ENCODE measurements at regions of chr15 and their contacts with region 1.

Region 1: DNA sequence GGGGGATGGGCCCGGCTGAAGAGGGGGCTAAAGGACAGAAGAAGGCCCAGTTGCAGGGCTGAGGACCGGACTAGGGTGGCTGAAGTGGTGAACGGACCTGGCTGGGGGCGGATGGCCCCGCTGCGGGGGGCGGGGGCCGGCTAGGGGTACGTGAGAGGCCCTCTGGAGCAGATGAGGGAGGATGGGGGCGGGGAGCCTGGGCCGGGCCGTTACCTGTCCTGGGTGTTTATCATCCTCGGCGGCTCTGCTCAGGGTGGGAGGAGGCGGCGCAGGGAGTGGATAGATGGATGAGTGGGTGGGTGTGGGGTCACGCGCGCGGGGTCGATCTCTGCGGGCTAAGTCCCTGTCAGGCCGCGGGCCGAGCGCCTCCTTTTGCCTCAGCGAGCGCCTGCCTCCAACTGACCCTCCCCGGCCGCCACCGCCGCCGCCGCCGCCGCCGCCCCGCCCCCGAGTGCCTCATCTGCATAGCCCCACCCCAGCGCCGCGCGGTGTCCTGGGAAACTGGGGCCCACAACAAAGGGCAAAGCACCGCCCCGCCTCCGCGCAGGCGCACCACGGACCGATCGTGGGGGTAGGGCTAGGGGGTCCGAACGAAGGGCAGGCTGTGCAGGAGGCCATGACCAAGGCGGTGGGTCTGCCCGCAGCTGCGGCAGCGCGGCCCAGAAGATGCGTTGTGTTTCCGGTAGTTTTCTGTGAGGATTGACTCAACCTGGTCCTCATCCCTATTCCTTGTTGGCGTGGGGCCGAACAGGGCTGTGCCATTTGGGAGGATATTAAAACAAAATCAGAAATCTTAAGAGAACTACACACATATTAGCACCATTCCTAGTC is 72.4 kb downstream of the RBPMS2 start:
- DNase-seq: peak; percentile 97
- H3K4me3 Mint-ChIP-seq: peak overlapping the region; percentile 83
- H3K27ac Mint-ChIP-seq: peak overlapping the region; percentile 41
- H3K4me1 Mint-ChIP-seq: peaks cover 51% of the 10 kb centered on the region
- H3K27me3 Mint-ChIP-seq: no peaks in the 10 kb centered on the region

Region 2: GRCh38 chr15:64162870-64163658 is 540.0 kb before region 1 on chr15 and contains the start of gene PPIB:
- CTCF ChIA-PET with region 1: no interaction called
- POLR2A ChIA-PET with region 1: no interaction called
- intact Hi-C with region 1: loop called (anchors 10 kb)
- DNase-seq: peak; percentile 98
- H3K4me3 Mint-ChIP-seq: peak within 1 kb of the TSS; percentile 88
- H3K27ac Mint-ChIP-seq: peak within 1 kb of the TSS; percentile 94
- H3K4me1 Mint-ChIP-seq: peaks cover 43% of the 10 kb centered on the region
- H3K27me3 Mint-ChIP-seq: no peaks in the 10 kb centered on the region
- total RNA-seq, gene PPIB: 277 to 283 TPM

Region 3: DNA sequence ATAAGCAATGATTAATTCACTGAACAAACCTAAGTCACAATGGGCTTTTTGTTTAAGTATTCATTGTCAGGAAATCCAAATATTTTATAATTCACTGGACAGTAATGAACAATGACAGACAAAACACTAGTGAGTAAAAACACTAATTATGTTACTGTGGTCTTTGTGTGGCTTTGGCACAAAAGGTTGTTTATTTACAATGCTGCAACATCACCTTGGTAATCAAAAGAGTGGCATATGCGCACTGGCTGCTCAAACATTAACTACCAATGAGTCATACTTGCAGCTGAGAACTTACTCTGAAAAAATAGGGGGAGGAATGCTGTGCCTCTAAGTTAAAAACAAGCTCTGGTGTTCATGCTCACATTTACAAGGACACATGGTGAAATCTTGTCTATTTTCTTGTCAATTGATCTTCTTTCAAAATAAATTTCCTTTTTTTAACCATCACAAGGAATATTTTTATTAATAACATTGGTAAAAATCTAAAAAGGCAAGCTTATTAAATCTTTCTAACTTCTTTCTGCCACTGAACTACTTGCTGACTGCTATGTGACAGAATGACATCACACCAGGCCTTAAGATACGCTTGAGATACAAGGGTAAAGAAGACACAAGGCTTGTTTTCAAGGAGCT is 455.0 kb before region 1 on chr15:
- CTCF ChIA-PET with region 1: no interaction called
- POLR2A ChIA-PET with region 1: no interaction called
- intact Hi-C with region 1: loop called (anchors 5 kb)
- DNase-seq: peak; percentile 29
- H3K4me3 Mint-ChIP-seq: no peak overlapping the region
- H3K27ac Mint-ChIP-seq: no peak overlapping the region
- H3K4me1 Mint-ChIP-seq: peaks cover 40% of the 10 kb centered on the region
- H3K27me3 Mint-ChIP-seq: peaks cover 2% of the 10 kb centered on the region

Region 4: DNA sequence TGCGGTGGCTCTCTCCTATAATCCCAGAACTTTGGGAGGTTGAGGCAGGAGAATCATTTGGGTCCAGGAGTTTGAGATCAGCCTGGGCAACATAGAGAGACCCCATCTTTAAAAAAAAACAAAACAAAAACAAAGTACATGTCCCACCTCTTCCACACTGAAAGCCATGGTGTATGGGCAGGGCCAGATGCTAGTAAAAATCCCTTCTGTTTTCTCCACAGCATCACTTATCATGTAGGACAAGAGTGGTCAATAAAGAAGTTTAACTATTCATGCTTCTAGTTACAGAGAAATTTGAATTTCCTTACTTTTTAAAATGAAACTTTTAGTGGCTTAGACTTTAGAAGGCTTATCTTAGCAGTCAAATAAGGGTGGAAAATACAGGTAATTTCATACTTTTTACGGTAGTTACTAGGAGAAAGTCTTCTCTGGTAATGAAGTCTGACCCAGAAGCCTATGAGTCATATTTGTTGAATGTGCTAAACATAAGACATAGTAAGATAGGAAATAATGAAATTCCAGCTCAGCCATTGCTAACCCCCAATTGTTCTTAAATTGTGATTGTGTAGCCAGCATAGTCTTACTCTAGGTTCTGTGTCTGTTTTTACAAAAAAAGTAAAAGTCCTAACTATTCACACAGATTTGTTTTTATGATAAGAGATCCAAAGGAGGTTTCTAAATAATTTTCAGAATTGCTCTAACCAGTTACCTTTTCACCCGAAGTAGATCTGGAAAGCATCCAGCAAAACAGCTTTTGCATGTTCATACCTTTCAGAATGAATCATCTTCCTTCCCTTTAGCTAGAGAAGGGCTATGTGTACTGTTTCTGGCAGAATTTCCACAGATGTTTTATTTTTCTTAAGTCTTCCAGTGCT is 259.0 kb before region 1 on chr15:
- CTCF ChIA-PET with region 1: no interaction called
- POLR2A ChIA-PET with region 1: no interaction called
- intact Hi-C with region 1: loop called (anchors 2 kb)
- DNase-seq: no peak
- H3K4me3 Mint-ChIP-seq: peak overlapping the region; percentile 36
- H3K27ac Mint-ChIP-seq: peak overlapping the region; percentile 91
- H3K4me1 Mint-ChIP-seq: peaks cover 48% of the 10 kb centered on the region
- H3K27me3 Mint-ChIP-seq: no peaks in the 10 kb centered on the region

Region 5: GRCh38 chr15:64622410-64623260 is 80.4 kb before region 1 on chr15:
- CTCF ChIA-PET with region 1: no interaction called
- POLR2A ChIA-PET with region 1: no interaction called
- intact Hi-C with region 1: loop called (anchors 5 kb)
- DNase-seq: peak; percentile 63
- H3K4me3 Mint-ChIP-seq: peak overlapping the region; percentile 24
- H3K27ac Mint-ChIP-seq: peak overlapping the region; percentile 90
- H3K4me1 Mint-ChIP-seq: peaks cover 88% of the 10 kb centered on the region
- H3K27me3 Mint-ChIP-seq: no peaks in the 10 kb centered on the region

Region 6: DNA sequence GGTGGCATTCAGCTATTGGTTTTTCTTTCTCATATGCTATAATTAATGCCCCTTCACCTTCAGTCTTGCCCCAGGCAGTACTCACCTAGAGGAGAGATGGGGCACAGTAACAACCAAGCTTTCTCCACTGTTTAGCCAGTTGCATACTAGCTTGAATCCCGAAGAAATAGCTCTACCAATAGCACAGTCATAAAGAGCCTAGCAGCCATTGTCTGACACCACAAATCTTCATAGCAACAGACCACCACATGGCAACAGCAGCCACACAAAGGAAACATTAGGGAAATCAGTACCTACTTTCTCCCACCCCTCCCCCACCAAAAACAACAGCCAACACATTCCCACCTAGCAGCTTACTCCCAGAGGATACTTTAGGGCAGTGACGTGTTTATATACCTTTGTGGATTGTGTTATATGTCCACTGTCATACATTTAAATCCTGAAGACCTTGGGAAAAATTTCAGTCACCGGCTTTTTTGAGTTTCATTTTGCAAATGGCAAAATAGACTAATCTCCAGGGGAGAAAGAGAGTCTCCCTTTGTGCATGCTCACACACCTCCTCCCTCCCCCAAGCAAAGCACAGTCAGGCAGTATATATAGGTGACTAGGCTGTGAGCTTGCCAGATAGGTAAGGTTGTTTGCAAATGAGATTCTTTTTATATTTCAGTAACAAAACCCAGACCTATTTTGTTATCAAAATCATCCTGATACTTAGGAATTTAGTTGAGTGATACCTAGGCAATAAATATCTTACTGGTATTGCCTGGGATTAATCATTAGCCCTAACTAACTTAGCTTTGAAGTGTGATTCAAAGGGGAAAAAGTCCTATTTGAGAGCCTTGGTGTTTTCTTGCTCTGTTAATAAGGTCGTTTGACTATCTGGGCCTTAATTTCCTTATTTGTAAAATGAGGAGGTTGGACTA is 68.2 kb before region 1 on chr15:
- CTCF ChIA-PET with region 1: no interaction called
- POLR2A ChIA-PET with region 1: no interaction called
- intact Hi-C with region 1: loop called (anchors 2 kb)
- DNase-seq: peak; percentile 69
- H3K4me3 Mint-ChIP-seq: no peak overlapping the region
- H3K27ac Mint-ChIP-seq: peak overlapping the region; percentile 72
- H3K4me1 Mint-ChIP-seq: peaks cover 58% of the 10 kb centered on the region
- H3K27me3 Mint-ChIP-seq: no peaks in the 10 kb centered on the region